ENCODE measurements at regions of chr12 and their contacts with region 1.

Region 1: GRCh38 chr12:21476949-21477348 is 24.5 kb downstream of the RECQL start:
- DNase-seq: no peak
- H3K4me3 Mint-ChIP-seq: no peak overlapping the region
- H3K27ac Mint-ChIP-seq: peak overlapping the region; percentile 73
- H3K4me1 Mint-ChIP-seq: peaks cover 14% of the 10 kb centered on the region
- H3K27me3 Mint-ChIP-seq: no peaks in the 10 kb centered on the region

Region 2: DNA sequence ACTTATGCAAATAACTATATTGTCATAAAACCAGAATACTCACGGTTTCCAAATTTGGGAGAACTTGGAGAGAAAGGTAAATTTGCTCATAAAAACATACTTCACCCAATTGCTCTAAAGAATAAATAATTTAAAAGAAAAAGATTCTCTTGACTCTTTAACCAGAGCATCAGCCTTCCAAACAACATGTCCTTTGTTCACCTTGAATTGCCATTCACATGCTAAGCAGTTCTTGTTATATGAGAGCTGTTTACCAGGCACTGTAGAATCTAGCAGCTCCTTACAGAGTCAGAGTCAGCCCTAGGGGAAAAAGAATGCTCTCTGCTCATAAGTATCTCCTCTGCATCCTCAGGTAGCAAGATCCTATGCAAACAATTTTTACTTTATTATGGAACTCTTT is 152.4 kb before region 1 on chr12:
- CTCF ChIA-PET with region 1: no interaction called
- POLR2A ChIA-PET with region 1: no interaction called
- intact Hi-C with region 1: loop called (anchors 10 kb)
- DNase-seq: no peak
- H3K4me3 Mint-ChIP-seq: no peak overlapping the region
- H3K27ac Mint-ChIP-seq: no peak overlapping the region
- H3K4me1 Mint-ChIP-seq: no peaks in the 10 kb centered on the region
- H3K27me3 Mint-ChIP-seq: no peaks in the 10 kb centered on the region